K562 (cell line): ENCODE measurements at regions of chr22 and their contacts with region 1.

Region 1: GRCh38 chr22:25202290-25202921 is 2.7 kb downstream of the CRYBB3 start:
- DNase-seq: peak; percentile 57 to 62 (median 61)
- ATAC-seq: peak; percentile 86
- H3K4me3 ChIP-seq: no peak overlapping the region
- H3K27ac ChIP-seq: no peak overlapping the region
- H3K4me1 ChIP-seq: no peaks in the 10 kb centered on the region; a peak in 1 of 5 replicates
- H3K27me3 ChIP-seq: peaks cover 4 to 19% of the 10 kb centered on the region in 2 experiments; a peak in 2 of 5 replicates
- CTCF ChIP-seq: peak; percentile 70 to 75 (median 73)
- EP300 ChIP-seq: no peak
- POLR2A ChIP-seq: no peak
- RAD21 ChIP-seq: peak; percentile 26 to 70

Region 2: GRCh38 chr22:25334162-25334490 is 131.7 kb after region 1 on chr22:
- CTCF ChIA-PET with region 1: no interaction called
- POLR2A ChIA-PET with region 1: no interaction called
- in situ Hi-C with region 1: loop called (anchors 10 kb)
- intact Hi-C with region 1: no loop called
- DNase-seq: peak; percentile 22 to 71 (median 29)
- ATAC-seq: peak; percentile 98
- H3K4me3 ChIP-seq: no peak overlapping the region
- H3K27ac ChIP-seq: no peak overlapping the region
- H3K4me1 ChIP-seq: no peaks in the 10 kb centered on the region
- H3K27me3 ChIP-seq: 0 out of 5 replicates have a peak, but pooled peaks cover 0 to 3% of the 10 kb centered on the region in 2 experiments
- CTCF ChIP-seq: peak; percentile 52 to 67 (median 62); a peak in 5 of 6 replicates
- EP300 ChIP-seq: no peak
- POLR2A ChIP-seq: no peak
- RAD21 ChIP-seq: peak in 1 of 2 experiments; percentile 42; a peak in 2 of 4 replicates